Activated CD4-positive, alpha-beta memory T cell treated with anti-CD3 and anti-CD28 coated beads for 36 hours (primary cell): ENCODE measurements at regions of chr1 and their contacts with region 1.

Region 1: GRCh38 chr1:6602669-6603237 is at the start of gene KLHL21:
- DNase-seq: peak; percentile 93
- H3K4me3 Mint-ChIP-seq: peak within 1 kb of the TSS; percentile 91
- H3K27ac Mint-ChIP-seq: peak within 1 kb of the TSS; percentile 97
- H3K4me1 Mint-ChIP-seq: peaks cover 20% of the 10 kb centered on the region
- H3K27me3 Mint-ChIP-seq: no peaks in the 10 kb centered on the region
- total RNA-seq, gene KLHL21: 18.1 to 19.4 TPM

Region 2: DNA sequence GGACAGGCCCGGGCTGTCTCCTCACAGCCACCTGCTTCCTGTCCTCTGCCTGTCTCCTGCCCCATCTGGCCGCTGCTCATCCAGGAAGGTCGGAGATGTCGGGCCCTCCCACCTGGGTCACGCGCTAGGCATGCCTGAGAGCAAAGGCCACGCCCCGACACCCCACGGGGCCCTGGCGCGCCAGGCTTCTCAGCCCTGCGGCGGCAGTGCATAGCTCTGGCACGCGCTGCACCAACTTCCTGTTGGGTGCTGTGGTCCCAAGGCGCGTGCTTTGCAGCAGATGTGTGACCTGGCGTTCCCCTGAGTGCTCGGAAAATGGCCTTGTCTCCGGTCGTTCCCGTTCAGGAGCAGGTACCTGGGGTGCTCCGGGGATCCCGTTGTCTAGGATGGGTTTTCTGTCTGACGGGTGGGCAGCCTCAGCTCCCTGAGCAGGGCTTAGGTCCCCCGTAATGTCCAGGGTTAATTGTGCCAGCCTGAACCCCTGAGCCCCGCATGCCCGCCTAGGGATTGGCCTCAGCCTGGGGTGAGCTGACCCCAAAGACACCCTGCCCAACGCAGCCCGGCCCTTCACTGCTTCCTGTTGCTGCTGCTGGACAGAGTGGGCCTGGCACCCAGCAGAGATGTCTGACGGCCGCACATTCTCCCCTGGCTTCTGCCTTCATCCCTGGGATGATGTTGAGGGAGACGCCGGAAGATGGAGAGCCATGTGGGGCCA is 576.5 kb before region 1 on chr1:
- CTCF ChIA-PET with region 1: no interaction called
- POLR2A ChIA-PET with region 1: no interaction called
- intact Hi-C with region 1: loop called (anchors 5 kb)
- DNase-seq: peak; percentile 97
- H3K4me3 Mint-ChIP-seq: peak overlapping the region; percentile 96
- H3K27ac Mint-ChIP-seq: peak overlapping the region; percentile 97
- H3K4me1 Mint-ChIP-seq: peaks cover 43% of the 10 kb centered on the region
- H3K27me3 Mint-ChIP-seq: no peaks in the 10 kb centered on the region

Region 3: DNA sequence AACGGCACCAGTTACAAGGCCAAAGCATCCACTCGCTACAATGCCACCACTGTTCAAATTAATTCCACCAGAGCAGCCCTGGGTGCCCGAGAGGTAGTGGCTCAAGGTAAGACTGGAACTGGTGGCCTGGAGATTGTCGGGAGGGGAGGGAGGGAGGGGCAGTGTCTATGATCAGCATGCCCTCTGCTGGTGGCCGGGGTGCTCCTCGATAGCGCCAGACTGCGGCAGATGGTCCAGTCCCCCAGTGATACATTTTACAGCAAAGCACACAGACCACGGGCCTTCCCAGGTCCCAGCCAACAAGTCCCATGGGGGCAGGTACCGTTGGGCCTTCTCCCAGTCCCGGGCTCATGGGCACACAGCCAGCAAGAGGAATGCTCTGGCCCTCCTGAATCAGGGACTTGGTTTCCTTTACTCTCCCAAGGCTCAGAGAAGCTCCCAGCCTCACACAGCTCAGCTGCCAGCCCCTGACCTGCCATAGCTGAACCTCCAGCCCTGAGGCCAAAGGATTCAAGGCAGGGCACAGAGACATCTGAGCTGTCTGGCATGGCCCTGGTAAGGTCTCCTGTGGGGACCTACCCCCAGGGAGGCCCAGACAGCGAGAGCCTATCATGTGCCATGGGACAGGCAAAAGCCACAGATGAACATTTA is 224.5 kb before region 1 on chr1:
- CTCF ChIA-PET with region 1: no interaction called
- POLR2A ChIA-PET with region 1: no interaction called
- intact Hi-C with region 1: no loop called
- DNase-seq: no peak
- H3K4me3 Mint-ChIP-seq: no peak overlapping the region
- H3K27ac Mint-ChIP-seq: no peak overlapping the region
- H3K4me1 Mint-ChIP-seq: no peaks in the 10 kb centered on the region
- H3K27me3 Mint-ChIP-seq: no peaks in the 10 kb centered on the region

Region 4: GRCh38 chr1:6523566-6523965 is 79.2 kb before region 1 on chr1:
- CTCF ChIA-PET with region 1: no interaction called
- POLR2A ChIA-PET with region 1: no interaction called
- intact Hi-C with region 1: no loop called
- DNase-seq: no peak
- H3K4me3 Mint-ChIP-seq: no peak overlapping the region
- H3K27ac Mint-ChIP-seq: no peak overlapping the region
- H3K4me1 Mint-ChIP-seq: no peaks in the 10 kb centered on the region
- H3K27me3 Mint-ChIP-seq: no peaks in the 10 kb centered on the region

Region 5: GRCh38 chr1:6554031-6554906 is 48.5 kb before region 1 on chr1 and contains the start of gene NOL9:
- CTCF ChIA-PET with region 1: interaction called, 20 read pairs
- POLR2A ChIA-PET with region 1: interaction called, 9 read pairs
- intact Hi-C with region 1: loop called (anchors 1 kb)
- DNase-seq: peak; percentile 97
- H3K4me3 Mint-ChIP-seq: peak within 1 kb of the TSS; percentile 76
- H3K27ac Mint-ChIP-seq: peak within 1 kb of the TSS; percentile 18
- H3K4me1 Mint-ChIP-seq: peaks cover 13% of the 10 kb centered on the region
- H3K27me3 Mint-ChIP-seq: no peaks in the 10 kb centered on the region
- total RNA-seq, gene NOL9: 29.8 to 32.5 TPM

Region 6: DNA sequence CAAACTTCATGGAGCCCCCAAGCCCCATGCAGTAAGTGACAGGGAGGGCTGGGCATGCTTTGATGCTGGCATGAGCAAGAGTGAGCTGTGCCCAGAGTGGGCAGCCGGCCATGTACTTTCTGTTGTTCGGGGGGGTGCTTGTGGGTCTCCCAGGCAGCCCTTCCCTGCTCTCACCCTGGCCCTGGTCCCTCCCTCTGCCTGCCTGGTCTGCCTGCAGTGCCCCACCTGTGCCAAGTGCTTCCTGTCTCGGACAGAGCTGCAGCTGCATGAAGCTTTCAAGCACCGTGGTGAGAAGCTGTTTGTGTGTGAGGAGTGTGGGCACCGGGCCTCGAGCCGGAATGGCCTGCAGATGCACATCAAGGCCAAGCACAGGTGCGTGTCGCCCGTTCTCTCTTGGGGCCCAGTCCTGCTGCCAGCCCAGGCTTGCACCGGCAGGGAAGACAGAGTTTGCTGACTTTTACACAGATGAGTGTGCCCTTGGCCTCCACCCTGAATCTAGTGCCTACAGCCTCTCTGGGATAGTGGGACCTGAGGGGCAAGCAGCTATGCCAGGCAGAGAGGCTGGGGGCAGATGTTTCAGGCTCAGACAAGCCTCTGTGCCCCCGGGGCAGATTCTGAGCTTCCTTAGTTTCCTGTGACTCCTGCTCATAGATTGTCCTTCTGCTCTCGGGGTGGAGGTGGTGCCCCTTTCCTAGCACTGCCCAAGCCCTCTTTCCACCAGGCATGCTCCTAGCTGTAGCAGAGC is 15.3 kb before region 1 on chr1:
- CTCF ChIA-PET with region 1: no interaction called
- POLR2A ChIA-PET with region 1: no interaction called
- intact Hi-C with region 1: no loop called
- DNase-seq: no peak
- H3K4me3 Mint-ChIP-seq: no peak overlapping the region
- H3K27ac Mint-ChIP-seq: peak overlapping the region; percentile 33
- H3K4me1 Mint-ChIP-seq: peaks cover 20% of the 10 kb centered on the region
- H3K27me3 Mint-ChIP-seq: no peaks in the 10 kb centered on the region

Region 7: GRCh38 chr1:6613361-6614018 is 10.7 kb after region 1 on chr1 and contains the start of gene PHF13:
- CTCF ChIA-PET with region 1: interaction called, 7 read pairs
- POLR2A ChIA-PET with region 1: interaction called, 26 read pairs
- intact Hi-C with region 1: loop called (anchors 1 kb)
- DNase-seq: peak; percentile 100
- H3K4me3 Mint-ChIP-seq: peak within 1 kb of the TSS; percentile 83
- H3K27ac Mint-ChIP-seq: peak within 1 kb of the TSS; percentile 74
- H3K4me1 Mint-ChIP-seq: peaks cover 23% of the 10 kb centered on the region
- H3K27me3 Mint-ChIP-seq: no peaks in the 10 kb centered on the region
- total RNA-seq, gene PHF13: 16.8 to 16.9 TPM

Region 8: GRCh38 chr1:6701437-6702153 is 98.8 kb after region 1 on chr1 and contains the start of gene DNAJC11:
- CTCF ChIA-PET with region 1: no interaction called
- POLR2A ChIA-PET with region 1: interaction called, 5 read pairs
- intact Hi-C with region 1: loop called (anchors 5 kb)
- DNase-seq: peak; percentile 92
- H3K4me3 Mint-ChIP-seq: peak within 1 kb of the TSS; percentile 86
- H3K27ac Mint-ChIP-seq: peak within 1 kb of the TSS; percentile 86
- H3K4me1 Mint-ChIP-seq: peaks cover 25% of the 10 kb centered on the region
- H3K27me3 Mint-ChIP-seq: no peaks in the 10 kb centered on the region
- total RNA-seq, gene DNAJC11: 35.5 to 38.3 TPM

Region 9: GRCh38 chr1:6784560-6785317 is 182.0 kb after region 1 on chr1:
- CTCF ChIA-PET with region 1: no interaction called
- POLR2A ChIA-PET with region 1: interaction called, 3 read pairs
- intact Hi-C with region 1: loop called (anchors 1 kb)
- DNase-seq: peak; percentile 100
- H3K4me3 Mint-ChIP-seq: peak overlapping the region; percentile 75
- H3K27ac Mint-ChIP-seq: peak overlapping the region; percentile 78
- H3K4me1 Mint-ChIP-seq: peaks cover 40% of the 10 kb centered on the region
- H3K27me3 Mint-ChIP-seq: no peaks in the 10 kb centered on the region

Region 10: GRCh38 chr1:6998267-6998666 is 395.5 kb after region 1 on chr1:
- CTCF ChIA-PET with region 1: no interaction called
- POLR2A ChIA-PET with region 1: no interaction called
- intact Hi-C with region 1: no loop called
- DNase-seq: no peak
- H3K4me3 Mint-ChIP-seq: no peak overlapping the region
- H3K27ac Mint-ChIP-seq: no peak overlapping the region
- H3K4me1 Mint-ChIP-seq: peaks cover 3% of the 10 kb centered on the region
- H3K27me3 Mint-ChIP-seq: peaks cover 20% of the 10 kb centered on the region